PC-9 (cell line): ENCODE measurements at regions of chr3 and their contacts with region 1.

Region 1: DNA sequence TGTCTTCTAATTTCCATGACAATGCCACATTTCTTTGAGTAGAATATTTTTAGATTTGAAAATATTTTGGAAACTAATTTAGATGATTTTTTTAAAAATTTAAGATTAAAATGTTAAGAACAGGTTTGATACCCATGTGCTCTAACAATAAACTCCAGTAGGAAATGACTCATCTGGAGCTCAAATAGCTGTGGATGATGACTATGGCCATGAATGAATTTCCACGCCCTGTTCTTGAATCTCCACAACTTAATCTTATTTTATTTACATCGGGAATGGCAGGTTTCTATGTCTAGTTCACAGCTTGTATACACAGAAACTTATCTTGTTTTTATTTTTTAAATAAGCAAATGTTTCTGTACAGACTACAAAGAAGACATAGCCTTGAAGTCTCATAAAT is 726.8 kb downstream of the NAALADL2 start:
- DNase-seq: peak; percentile 4 to 50
- H3K4me3 ChIP-seq: no peak overlapping the region
- H3K27ac ChIP-seq: no peak overlapping the region
- H3K4me1 ChIP-seq: no peaks in the 10 kb centered on the region; the same call in 1 of the 2 replicates
- H3K27me3 ChIP-seq: no peaks in the 10 kb centered on the region
- CTCF ChIP-seq: no peak

Region 2: GRCh38 chr3:175526609-175527280 is 59.2 kb before region 1 on chr3:
- CTCF ChIA-PET with region 1: no interaction called
- POLR2A ChIA-PET with region 1: interaction called, 17 read pairs
- intact Hi-C with region 1: no loop called
- DNase-seq: no peak
- H3K4me3 ChIP-seq: peak overlapping the region; percentile 54
- H3K27ac ChIP-seq: no peak overlapping the region
- H3K4me1 ChIP-seq: no peaks in the 10 kb centered on the region
- H3K27me3 ChIP-seq: no peaks in the 10 kb centered on the region
- CTCF ChIP-seq: no peak